WTC11 (cell line): ENCODE measurements at regions of chr15 and their contacts with region 1.

Region 1: DNA sequence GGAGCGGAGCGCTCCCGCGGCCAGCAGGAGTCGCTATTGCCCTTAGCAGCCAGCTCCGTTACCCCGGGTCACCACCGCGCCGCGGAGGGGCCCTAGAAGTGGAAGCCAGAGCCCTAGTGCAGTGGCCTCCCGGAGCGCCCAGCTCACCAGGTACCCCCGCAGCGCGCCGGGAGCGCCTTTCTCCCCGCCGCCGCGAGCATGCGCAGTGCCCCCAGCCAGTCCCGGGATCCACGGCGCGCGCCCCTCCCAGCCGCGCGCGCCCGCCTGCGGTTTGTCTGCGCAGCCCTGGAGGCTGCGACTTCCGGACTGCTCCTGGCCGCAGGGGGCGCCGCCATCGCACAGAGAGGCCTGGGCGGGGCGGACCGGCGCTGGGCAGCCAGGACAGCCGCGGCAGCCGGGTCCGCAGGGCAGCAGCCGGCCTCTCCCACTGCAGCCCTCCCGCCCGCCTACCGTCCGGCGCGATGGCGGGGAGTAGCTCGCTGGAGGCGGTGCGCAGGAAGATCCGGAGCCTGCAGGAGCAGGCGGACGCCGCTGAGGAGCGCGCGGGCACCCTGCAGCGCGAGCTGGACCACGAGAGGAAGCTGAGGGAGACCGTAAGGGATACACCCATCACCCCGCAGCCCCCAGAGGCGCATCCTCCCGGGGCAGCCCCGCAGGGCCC is 5.7 kb downstream of the TPM1 start:
- DNase-seq: peak; percentile 95
- ATAC-seq: peak; percentile 70
- H3K4me3 Mint-ChIP-seq: peak overlapping the region; percentile 90
- H3K27ac Mint-ChIP-seq: no peak overlapping the region
- H3K4me1 Mint-ChIP-seq: peaks cover 80% of the 10 kb centered on the region
- H3K27me3 Mint-ChIP-seq: no peaks in the 10 kb centered on the region
- CTCF ChIP-seq: peak; percentile 94

Region 2: GRCh38 chr15:62742409-62743171 is 305.7 kb before region 1 on chr15:
- CTCF ChIA-PET with region 1: interaction called, 12 read pairs
- POLR2A ChIA-PET with region 1: no interaction called
- DNase-seq: peak; percentile 36
- ATAC-seq: peak; percentile 80
- H3K4me3 Mint-ChIP-seq: no peak overlapping the region
- H3K27ac Mint-ChIP-seq: no peak overlapping the region
- H3K4me1 Mint-ChIP-seq: peaks cover 9% of the 10 kb centered on the region
- H3K27me3 Mint-ChIP-seq: no peaks in the 10 kb centered on the region; the same call in 1 of the 2 replicates
- CTCF ChIP-seq: peak; percentile 68

Region 3: GRCh38 chr15:62847900-62848489 is 200.2 kb before region 1 on chr15:
- CTCF ChIA-PET with region 1: interaction called, 131 read pairs
- POLR2A ChIA-PET with region 1: interaction called, 12 read pairs
- DNase-seq: peak; percentile 88
- ATAC-seq: peak; percentile 23
- H3K4me3 Mint-ChIP-seq: no peak overlapping the region
- H3K27ac Mint-ChIP-seq: peak overlapping the region; percentile 92; the same call in 1 of the 2 replicates
- H3K4me1 Mint-ChIP-seq: peaks cover 63% of the 10 kb centered on the region
- H3K27me3 Mint-ChIP-seq: no peaks in the 10 kb centered on the region; the same call in 1 of the 2 replicates
- CTCF ChIP-seq: peak; percentile 62

Region 4: DNA sequence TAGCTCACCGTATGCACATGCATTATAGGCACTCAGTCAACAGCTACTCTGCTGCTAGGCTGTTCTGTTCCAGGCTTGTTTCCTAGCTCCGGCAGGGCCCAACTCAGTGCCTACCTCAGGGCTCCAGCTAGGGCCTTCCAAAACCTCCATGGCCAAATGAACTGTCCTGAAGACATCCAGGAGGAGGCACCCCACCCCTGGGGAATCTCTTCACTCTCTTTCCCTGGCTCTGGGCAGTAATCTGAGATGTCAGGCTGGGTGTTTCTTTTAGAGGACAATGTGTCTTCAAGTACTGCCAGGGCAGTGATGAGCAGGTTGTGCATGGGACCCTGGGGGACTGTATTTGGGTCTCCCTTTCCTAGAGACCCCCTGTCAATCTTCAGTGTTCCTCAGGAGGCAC is 44.0 kb before region 1 on chr15:
- CTCF ChIA-PET with region 1: interaction called, 11 read pairs
- POLR2A ChIA-PET with region 1: interaction called, 3 read pairs
- DNase-seq: peak; percentile 34
- ATAC-seq: peak; percentile 85
- H3K4me3 Mint-ChIP-seq: no peak overlapping the region
- H3K27ac Mint-ChIP-seq: no peak overlapping the region
- H3K4me1 Mint-ChIP-seq: peaks cover 14% of the 10 kb centered on the region
- H3K27me3 Mint-ChIP-seq: no peaks in the 10 kb centered on the region
- CTCF ChIP-seq: no peak

Region 5: GRCh38 chr15:63035977-63036376 is 12.3 kb before region 1 on chr15:
- CTCF ChIA-PET with region 1: interaction called, 27 read pairs
- POLR2A ChIA-PET with region 1: interaction called, 9 read pairs
- DNase-seq: no peak
- ATAC-seq: peak; percentile 67
- H3K4me3 Mint-ChIP-seq: no peak overlapping the region
- H3K27ac Mint-ChIP-seq: no peak overlapping the region
- H3K4me1 Mint-ChIP-seq: peaks cover 28% of the 10 kb centered on the region
- H3K27me3 Mint-ChIP-seq: peaks cover 7% of the 10 kb centered on the region
- CTCF ChIP-seq: no peak

Region 6: GRCh38 chr15:63075015-63075983 is 27.1 kb after region 1 on chr15:
- CTCF ChIA-PET with region 1: interaction called, 27 read pairs
- POLR2A ChIA-PET with region 1: interaction called, 5 read pairs
- DNase-seq: no peak
- ATAC-seq: peak; percentile 10
- H3K4me3 Mint-ChIP-seq: peak overlapping the region; percentile 39
- H3K27ac Mint-ChIP-seq: peak overlapping the region; percentile 96
- H3K4me1 Mint-ChIP-seq: peaks cover 75% of the 10 kb centered on the region
- H3K27me3 Mint-ChIP-seq: no peaks in the 10 kb centered on the region
- CTCF ChIP-seq: no peak

Region 7: DNA sequence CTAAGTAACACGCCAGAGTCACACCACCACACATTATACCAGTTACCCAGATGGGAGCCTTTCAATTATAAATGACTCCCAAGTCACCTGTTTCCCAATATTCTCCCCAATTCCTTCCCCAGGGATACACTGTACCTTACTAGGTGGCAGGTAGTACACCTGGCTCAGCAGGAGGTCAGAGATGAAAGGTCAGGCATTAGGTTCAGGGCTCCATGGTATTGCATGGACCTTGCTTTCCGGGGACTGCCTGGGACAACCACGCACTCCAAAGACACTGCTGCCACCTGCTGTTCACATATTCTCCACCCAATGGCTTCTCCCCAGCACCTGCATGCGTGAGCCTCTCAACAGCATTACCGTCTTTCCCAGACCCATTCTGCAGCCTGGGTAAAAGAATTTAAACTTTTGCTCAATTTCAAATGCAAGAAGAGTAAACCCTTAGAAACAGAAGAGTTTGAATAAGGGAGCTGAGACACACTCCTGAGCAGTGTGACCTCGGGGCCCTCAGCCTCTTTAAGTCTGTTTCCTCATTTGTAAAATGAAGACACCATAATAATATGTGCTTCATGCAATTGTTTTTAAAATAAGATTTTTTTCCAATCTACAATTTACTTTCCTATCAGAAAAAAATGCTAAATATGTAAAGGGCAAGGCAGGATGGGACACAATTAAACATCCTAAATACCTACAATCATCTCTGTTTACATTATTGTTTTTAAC is 45.4 kb after region 1 on chr15:
- CTCF ChIA-PET with region 1: interaction called, 61 read pairs
- POLR2A ChIA-PET with region 1: interaction called, 21 read pairs
- DNase-seq: peak; percentile 85
- ATAC-seq: peak; percentile 87
- H3K4me3 Mint-ChIP-seq: no peak overlapping the region
- H3K27ac Mint-ChIP-seq: no peak overlapping the region
- H3K4me1 Mint-ChIP-seq: peaks cover 34% of the 10 kb centered on the region
- H3K27me3 Mint-ChIP-seq: no peaks in the 10 kb centered on the region
- CTCF ChIP-seq: peak; percentile 59

Region 8: GRCh38 chr15:63203451-63204090 is 155.3 kb after region 1 on chr15:
- CTCF ChIA-PET with region 1: no interaction called
- POLR2A ChIA-PET with region 1: no interaction called
- DNase-seq: no peak
- ATAC-seq: peak; percentile 57; the same call in 1 of the 2 replicates
- H3K4me3 Mint-ChIP-seq: no peak overlapping the region
- H3K27ac Mint-ChIP-seq: no peak overlapping the region
- H3K4me1 Mint-ChIP-seq: peaks cover 29% of the 10 kb centered on the region
- H3K27me3 Mint-ChIP-seq: no peaks in the 10 kb centered on the region
- CTCF ChIP-seq: no peak

Region 9: GRCh38 chr15:64930778-64931371 is 1882.6 kb after region 1 on chr15:
- CTCF ChIA-PET with region 1: no interaction called
- POLR2A ChIA-PET with region 1: no interaction called
- DNase-seq: no peak
- ATAC-seq: no peak
- H3K4me3 Mint-ChIP-seq: no peak overlapping the region
- H3K27ac Mint-ChIP-seq: 0 out of 2 replicates have a peak overlapping the region, but pooled peaks have one; percentile 2
- H3K4me1 Mint-ChIP-seq: no peaks in the 10 kb centered on the region
- H3K27me3 Mint-ChIP-seq: no peaks in the 10 kb centered on the region
- CTCF ChIP-seq: no peak